H1 (cell line): ENCODE measurements at regions of chr19 and their contacts with region 1.

Region 1: GRCh38 chr19:33373701-33374421 is at the start of gene CEBPG:
- DNase-seq: peak in 1 of 2 experiments; percentile 59
- H3K4me3 ChIP-seq: peak within 1 kb of the TSS; percentile 73 to 99 (median 83)
- H3K27ac ChIP-seq: peak within 1 kb of the TSS; percentile 73; the same call in 1 of the 2 replicates
- H3K4me1 ChIP-seq: peaks cover 4 to 9% (median 4%) of the 10 kb centered on the region in 4 experiments; a peak in 4 of 7 replicates
- H3K27me3 ChIP-seq: no peaks in the 10 kb centered on the region
- CTCF ChIP-seq: peak in 2 of 3 experiments; percentile 2 to 9; a peak in 3 of 4 replicates
- EP300 ChIP-seq: no peak
- POLR2A ChIP-seq: peak; percentile 74 to 79; a peak in 2 of 3 replicates
- RAD21 ChIP-seq: no peak
- total RNA-seq, gene CEBPG: 32.7 and 35.4 TPM in 2 replicates

Region 2: DNA sequence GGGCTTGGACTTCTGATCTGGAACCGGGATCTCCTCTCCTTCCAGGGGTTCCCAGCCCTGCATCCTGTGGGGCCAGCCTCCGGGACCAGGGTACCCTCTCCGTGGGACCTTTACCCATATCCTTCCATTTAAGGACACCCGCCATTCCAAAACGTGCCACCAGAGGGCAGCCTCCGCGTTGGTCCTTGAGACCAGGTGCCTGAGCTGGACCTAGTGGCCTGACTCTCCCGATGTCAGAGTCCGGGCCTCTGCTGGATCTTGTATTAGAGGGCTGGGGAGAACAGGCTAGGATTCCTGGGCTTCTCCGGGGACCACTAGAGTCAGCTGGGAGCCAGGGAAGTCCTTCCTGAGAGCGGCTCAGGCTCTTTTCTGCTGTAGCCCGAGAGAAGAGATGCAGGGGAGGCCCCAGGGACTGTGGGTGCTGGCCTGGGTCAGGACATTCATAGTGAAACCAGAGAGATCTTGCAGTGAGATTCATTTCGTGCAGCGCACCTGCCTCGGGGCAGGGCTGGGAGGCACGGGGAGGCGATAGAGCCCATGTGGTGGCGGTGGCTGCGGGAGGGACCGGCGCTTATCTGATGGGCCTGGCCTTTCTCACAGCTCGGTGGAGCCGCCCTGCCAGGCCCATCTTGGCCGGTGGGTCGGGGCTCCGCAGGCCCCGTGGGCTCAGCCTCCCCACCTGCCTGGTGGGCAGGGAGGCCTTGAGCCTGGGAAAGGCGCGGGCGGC is 138.4 kb before region 1 on chr19:
- CTCF ChIA-PET with region 1: interaction called, 5 read pairs
- POLR2A ChIA-PET with region 1: interaction called, 13 read pairs
- DNase-seq: peak; percentile 70 to 99
- H3K4me3 ChIP-seq: no peak overlapping the region
- H3K27ac ChIP-seq: no peak overlapping the region
- H3K4me1 ChIP-seq: no peaks in the 10 kb centered on the region; a peak in 1 of 7 replicates
- H3K27me3 ChIP-seq: no peaks in the 10 kb centered on the region
- CTCF ChIP-seq: peak; percentile 90 to 91 (median 91)
- EP300 ChIP-seq: no peak
- POLR2A ChIP-seq: no peak
- RAD21 ChIP-seq: peak; percentile 87 to 94

Region 3: GRCh38 chr19:33296241-33296971 is 77.5 kb before region 1 on chr19:
- CTCF ChIA-PET with region 1: interaction called, 4 read pairs
- POLR2A ChIA-PET with region 1: interaction called, 48 read pairs
- DNase-seq: no peak
- H3K4me3 ChIP-seq: no peak overlapping the region
- H3K27ac ChIP-seq: no peak overlapping the region
- H3K4me1 ChIP-seq: peaks cover 0 to 14% (median 6%) of the 10 kb centered on the region in 4 experiments; a peak in 5 of 7 replicates
- H3K27me3 ChIP-seq: peaks cover 12 to 25% (median 21%) of the 10 kb centered on the region in 4 experiments
- CTCF ChIP-seq: no peak
- EP300 ChIP-seq: no peak
- POLR2A ChIP-seq: no peak
- RAD21 ChIP-seq: no peak

Region 4: DNA sequence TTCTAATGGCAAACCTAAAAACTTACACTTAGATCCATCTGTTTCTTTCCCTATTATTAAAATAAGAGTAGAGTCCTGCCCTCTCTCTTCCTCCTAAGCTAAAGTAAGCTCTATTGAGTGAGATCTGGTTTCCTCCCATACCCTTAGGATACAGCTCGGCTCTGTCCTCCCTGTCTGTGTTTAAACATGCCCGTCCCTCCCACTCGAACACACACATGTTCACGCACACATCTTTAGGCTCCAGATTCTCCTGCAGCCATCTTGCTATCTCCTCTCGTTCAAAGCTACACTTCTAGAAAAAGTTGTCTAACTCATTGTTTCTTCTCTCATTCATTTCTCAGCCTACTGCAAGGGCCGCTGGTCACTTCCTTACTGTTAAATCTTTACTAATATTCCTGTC is 15.5 kb before region 1 on chr19:
- CTCF ChIA-PET with region 1: interaction called, 8 read pairs
- POLR2A ChIA-PET with region 1: interaction called, 44 read pairs
- DNase-seq: no peak
- H3K4me3 ChIP-seq: no peak overlapping the region
- H3K27ac ChIP-seq: no peak overlapping the region
- H3K4me1 ChIP-seq: no peaks in the 10 kb centered on the region
- H3K27me3 ChIP-seq: no peaks in the 10 kb centered on the region; a peak in 1 of 7 replicates
- CTCF ChIP-seq: no peak
- EP300 ChIP-seq: no peak
- POLR2A ChIP-seq: no peak
- RAD21 ChIP-seq: no peak

Region 5: DNA sequence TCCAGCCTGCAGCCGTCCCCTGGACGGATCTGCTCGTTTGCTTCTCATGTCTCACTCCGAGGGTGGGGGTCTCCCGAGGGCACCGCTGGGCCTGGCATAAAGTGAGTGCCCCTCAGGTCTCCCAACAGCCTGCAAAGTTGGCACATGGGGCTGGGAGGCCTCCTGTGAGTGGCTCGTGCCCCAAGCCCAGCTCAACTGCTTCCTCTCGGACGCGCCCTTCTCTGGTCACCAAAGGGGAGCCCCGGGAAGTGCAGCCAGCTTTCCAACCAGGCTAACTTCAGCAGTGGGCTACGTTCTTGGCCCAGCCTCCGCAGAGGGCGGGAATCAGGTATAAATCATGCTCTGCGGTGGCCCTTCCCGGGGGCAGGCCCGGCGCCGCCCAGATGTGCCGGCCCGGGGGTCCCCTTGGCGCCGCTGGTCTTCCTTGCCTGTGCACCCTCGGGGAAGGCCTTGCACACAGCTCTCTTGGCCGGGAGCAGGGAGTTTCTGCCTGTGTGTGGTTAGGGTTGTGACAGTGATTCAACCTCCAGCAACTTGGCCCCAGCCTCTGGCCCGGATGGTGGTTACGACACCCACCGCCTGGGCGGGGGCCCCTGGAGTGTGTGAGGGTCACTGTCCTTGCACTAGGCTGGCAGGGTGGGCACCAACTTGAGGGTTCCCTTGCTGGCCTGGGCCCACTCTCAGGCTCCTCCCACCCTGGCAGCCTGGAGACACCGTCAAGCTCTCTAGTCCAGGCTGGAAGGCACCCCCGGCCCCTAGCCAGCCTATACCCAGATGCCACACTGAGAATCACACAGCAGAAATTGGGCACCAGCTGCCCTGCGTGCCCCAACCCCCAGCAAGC is 20.4 kb after region 1 on chr19:
- CTCF ChIA-PET with region 1: interaction called, 21 read pairs
- POLR2A ChIA-PET with region 1: interaction called, 87 read pairs
- DNase-seq: no peak
- H3K4me3 ChIP-seq: no peak overlapping the region
- H3K27ac ChIP-seq: no peak overlapping the region
- H3K4me1 ChIP-seq: peaks cover 0 to 14% (median 8%) of the 10 kb centered on the region in 4 experiments; a peak in 4 of 7 replicates
- H3K27me3 ChIP-seq: no peaks in the 10 kb centered on the region
- CTCF ChIP-seq: no peak
- EP300 ChIP-seq: no peak
- POLR2A ChIP-seq: no peak
- RAD21 ChIP-seq: no peak

Region 6: GRCh38 chr19:33472691-33473652 is 99.1 kb after region 1 on chr19:
- CTCF ChIA-PET with region 1: no interaction called
- POLR2A ChIA-PET with region 1: no interaction called
- DNase-seq: no peak
- H3K4me3 ChIP-seq: no peak overlapping the region
- H3K27ac ChIP-seq: no peak overlapping the region
- H3K4me1 ChIP-seq: no peaks in the 10 kb centered on the region; a peak in 1 of 7 replicates
- H3K27me3 ChIP-seq: no peaks in the 10 kb centered on the region
- CTCF ChIP-seq: no peak
- EP300 ChIP-seq: no peak
- POLR2A ChIP-seq: no peak
- RAD21 ChIP-seq: no peak